IMR-90 (cell line): ENCODE measurements at regions of chr15 and their contacts with region 1.

Region 1: GRCh38 chr15:34101366-34102175 is at the starts of genes EMC7 and PGBD4:
- DNase-seq: peak; percentile 100
- ATAC-seq: peak; percentile 99
- H3K4me3 ChIP-seq: peak within 1 kb of the TSS; percentile 76
- H3K27ac ChIP-seq: peak within 1 kb of the TSS; percentile 88
- H3K4me1 ChIP-seq: peaks cover 4% of the 10 kb centered on the region; the same call in 1 of the 2 replicates
- H3K27me3 ChIP-seq: no peaks in the 10 kb centered on the region
- CTCF ChIP-seq: no peak
- POLR2A ChIP-seq: peak; percentile 93
- RAD21 ChIP-seq: no peak
- total RNA-seq, gene EMC7: 46.6 and 58.6 TPM in 2 replicates
- total RNA-seq, gene PGBD4: 1.3 and 1.9 TPM in 2 replicates

Region 2: DNA sequence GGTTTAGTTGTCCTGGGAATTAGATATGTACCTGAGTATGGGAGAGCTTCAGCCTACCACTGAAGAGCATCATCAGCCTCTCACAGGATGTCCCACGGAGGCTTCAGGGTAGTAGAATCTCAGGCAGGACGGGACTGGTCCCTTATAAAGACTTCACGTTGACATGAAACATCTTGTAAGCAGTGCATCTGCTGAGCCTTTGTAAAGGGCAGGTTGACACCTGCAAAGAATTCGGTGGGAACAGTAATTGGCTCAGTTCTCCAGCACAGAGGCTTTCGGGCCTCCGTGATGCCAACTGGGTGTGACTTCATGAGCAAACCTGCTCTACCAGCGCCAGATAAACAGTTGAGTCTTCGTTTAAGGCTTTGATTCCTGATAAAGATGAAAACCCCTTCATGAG is 35.6 kb before region 1 on chr15:
- CTCF ChIA-PET with region 1: no interaction called
- POLR2A ChIA-PET with region 1: no interaction called
- dilution Hi-C with region 1: no loop called
- in situ Hi-C with region 1: no loop called
- intact Hi-C with region 1: loop called (anchors 5 kb)
- DNase-seq: no peak
- ATAC-seq: no peak
- H3K4me3 ChIP-seq: no peak overlapping the region
- H3K27ac ChIP-seq: no peak overlapping the region
- H3K4me1 ChIP-seq: no peaks in the 10 kb centered on the region
- H3K27me3 ChIP-seq: no peaks in the 10 kb centered on the region
- CTCF ChIP-seq: no peak
- POLR2A ChIP-seq: no peak
- RAD21 ChIP-seq: no peak

Region 3: DNA sequence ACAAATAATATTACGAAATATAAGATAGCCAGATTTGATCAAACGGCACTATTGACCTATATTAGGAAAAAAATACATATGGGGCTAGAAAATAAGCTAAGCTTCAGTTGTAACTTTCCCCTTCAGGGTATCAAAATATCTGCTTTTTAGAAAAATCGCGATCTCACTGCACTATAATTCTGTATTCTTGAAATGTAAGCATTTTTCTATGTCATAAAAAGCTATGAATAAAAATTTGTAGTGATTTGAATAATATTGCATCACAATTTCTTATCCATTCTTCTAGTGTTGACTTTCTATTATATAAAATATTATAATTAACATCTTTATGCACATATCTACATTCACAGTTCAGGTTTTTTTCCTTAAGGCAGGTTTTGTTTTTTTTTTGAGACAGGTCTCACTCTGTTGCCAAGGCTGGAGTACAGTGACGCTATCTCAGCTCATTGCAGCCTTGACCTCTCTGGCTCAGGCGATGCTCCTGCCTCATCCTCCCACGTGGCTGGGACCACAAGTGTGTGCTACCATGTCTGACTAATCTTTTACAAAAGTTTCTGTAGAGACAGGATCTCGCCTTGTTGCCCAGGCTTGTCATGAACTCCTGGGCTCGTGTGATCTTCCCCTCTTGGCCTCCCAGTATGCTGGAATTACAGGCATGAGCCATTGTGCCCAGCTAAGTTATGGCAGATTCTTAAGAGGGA is 144.9 kb after region 1 on chr15:
- CTCF ChIA-PET with region 1: no interaction called
- POLR2A ChIA-PET with region 1: no interaction called
- dilution Hi-C with region 1: no loop called
- in situ Hi-C with region 1: no loop called
- intact Hi-C with region 1: no loop called
- DNase-seq: peak; percentile 59
- ATAC-seq: no peak
- H3K4me3 ChIP-seq: no peak overlapping the region
- H3K27ac ChIP-seq: no peak overlapping the region
- H3K4me1 ChIP-seq: no peaks in the 10 kb centered on the region
- H3K27me3 ChIP-seq: no peaks in the 10 kb centered on the region
- CTCF ChIP-seq: no peak
- POLR2A ChIP-seq: no peak
- RAD21 ChIP-seq: no peak